ENCODE measurements at regions of chr5 and their contacts with region 1.

Region 1: DNA sequence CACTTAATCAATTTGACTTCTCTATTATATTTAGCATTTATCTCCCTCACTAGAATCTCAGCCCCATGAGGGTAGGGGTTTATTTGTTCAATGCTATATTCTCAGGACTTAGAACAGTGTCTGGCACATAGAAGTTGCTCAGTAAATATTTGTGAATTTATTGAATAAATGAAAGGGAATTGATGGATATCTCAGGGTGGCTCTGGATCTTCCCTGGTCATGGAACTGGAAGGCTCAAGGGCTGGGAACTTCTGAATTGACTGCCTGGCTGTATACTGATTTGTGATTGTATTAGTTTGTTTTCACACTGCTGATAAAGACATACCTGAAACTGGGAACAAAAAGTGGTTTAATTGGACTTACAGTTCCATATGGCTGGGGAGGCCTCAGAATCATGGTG is 57.2 kb downstream of the KIF4B start:
- DNase-seq: no peak
- H3K4me3 ChIP-seq: no peak overlapping the region
- H3K27ac ChIP-seq: no peak overlapping the region
- H3K4me1 ChIP-seq: no peaks in the 10 kb centered on the region
- H3K27me3 ChIP-seq: no peaks in the 10 kb centered on the region
- CTCF ChIP-seq: no peak
- EP300 ChIP-seq: no peak
- POLR2A ChIP-seq: no peak

Region 2: DNA sequence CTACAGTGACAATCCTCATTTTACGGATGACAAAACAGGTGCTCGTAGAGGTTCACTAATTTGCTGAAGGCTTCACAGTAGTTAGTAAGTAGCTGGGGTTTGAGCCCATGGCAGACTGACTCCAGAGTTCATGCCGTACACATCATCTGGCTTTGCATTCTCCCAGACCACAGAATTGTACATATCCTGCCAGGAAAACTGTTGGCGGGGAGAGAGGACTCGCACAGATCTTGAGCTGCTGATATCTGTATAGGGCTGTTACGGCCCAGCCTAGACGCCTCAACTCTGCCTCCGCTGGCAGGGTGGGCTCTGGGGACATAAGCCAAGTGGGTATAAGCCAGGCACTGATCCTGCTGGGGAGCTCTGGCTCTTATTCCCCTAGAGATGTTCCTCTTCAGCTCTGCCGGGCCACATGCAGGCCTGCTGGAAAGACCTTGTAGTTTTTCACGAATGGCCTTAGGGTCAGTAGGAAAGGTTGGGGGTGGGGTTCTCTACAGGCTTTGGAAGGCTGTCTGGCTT is 299.3 kb before region 1 on chr5:
- in situ Hi-C with region 1: no loop called
- intact Hi-C with region 1: no loop called
- DNase-seq: no peak
- H3K4me3 ChIP-seq: no peak overlapping the region
- H3K27ac ChIP-seq: peak overlapping the region; percentile 50 to 63 (median 55)
- H3K4me1 ChIP-seq: peaks cover 38 to 77% (median 47%) of the 10 kb centered on the region in 4 donors
- H3K27me3 ChIP-seq: no peaks in the 10 kb centered on the region
- CTCF ChIP-seq: no peak
- EP300 ChIP-seq: no peak
- POLR2A ChIP-seq: no peak

Region 3: GRCh38 chr5:155046591-155046990 is 24.2 kb before region 1 on chr5:
- in situ Hi-C with region 1: no loop called
- intact Hi-C with region 1: loop called (anchors 1 kb)
- DNase-seq: no peak
- H3K4me3 ChIP-seq: no peak overlapping the region
- H3K27ac ChIP-seq: no peak overlapping the region
- H3K4me1 ChIP-seq: no peaks in the 10 kb centered on the region
- H3K27me3 ChIP-seq: peaks cover 4% of the 10 kb centered on the region
- CTCF ChIP-seq: no peak
- EP300 ChIP-seq: no peak
- POLR2A ChIP-seq: no peak

Region 4: GRCh38 chr5:155353231-155353630 is 282.4 kb after region 1 on chr5:
- in situ Hi-C with region 1: no loop called
- intact Hi-C with region 1: no loop called
- DNase-seq: no peak
- H3K4me3 ChIP-seq: no peak overlapping the region
- H3K27ac ChIP-seq: no peak overlapping the region
- H3K4me1 ChIP-seq: no peaks in the 10 kb centered on the region
- H3K27me3 ChIP-seq: no peaks in the 10 kb centered on the region
- CTCF ChIP-seq: no peak
- EP300 ChIP-seq: no peak
- POLR2A ChIP-seq: no peak

Region 5: DNA sequence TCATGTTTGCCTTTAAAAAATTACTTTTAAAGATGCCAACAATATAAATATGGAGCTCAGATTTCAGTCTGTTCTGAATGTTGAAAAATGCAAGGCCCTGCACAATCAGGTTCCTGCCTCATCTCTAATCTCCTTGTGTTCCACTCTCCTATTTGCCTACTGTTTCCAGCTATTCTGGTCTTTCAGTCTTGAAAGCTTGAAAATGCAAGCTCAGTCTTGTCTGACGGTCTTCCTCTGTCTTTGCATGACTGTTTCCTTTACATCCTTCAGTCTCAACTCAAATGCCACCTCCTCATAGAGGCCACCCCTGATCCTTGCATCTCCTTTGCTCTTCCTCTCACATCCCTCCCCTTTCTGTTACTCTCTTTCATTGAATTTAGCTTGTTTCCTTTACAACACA is 297.7 kb after region 1 on chr5:
- in situ Hi-C with region 1: no loop called
- intact Hi-C with region 1: no loop called
- DNase-seq: no peak
- H3K4me3 ChIP-seq: no peak overlapping the region
- H3K27ac ChIP-seq: no peak overlapping the region
- H3K4me1 ChIP-seq: no peaks in the 10 kb centered on the region
- H3K27me3 ChIP-seq: no peaks in the 10 kb centered on the region
- CTCF ChIP-seq: no peak
- EP300 ChIP-seq: no peak
- POLR2A ChIP-seq: no peak

Region 6: GRCh38 chr5:155556700-155557099 is 485.9 kb after region 1 on chr5:
- in situ Hi-C with region 1: no loop called
- intact Hi-C with region 1: no loop called
- DNase-seq: no peak
- H3K4me3 ChIP-seq: no peak overlapping the region
- H3K27ac ChIP-seq: no peak overlapping the region
- H3K4me1 ChIP-seq: no peaks in the 10 kb centered on the region
- H3K27me3 ChIP-seq: no peaks in the 10 kb centered on the region
- CTCF ChIP-seq: no peak
- EP300 ChIP-seq: no peak
- POLR2A ChIP-seq: no peak

Measured in transverse colon (tissue), 4 donors.